BJ (cell line): ENCODE measurements at regions of chr21 and their contacts with region 1.

Region 1: DNA sequence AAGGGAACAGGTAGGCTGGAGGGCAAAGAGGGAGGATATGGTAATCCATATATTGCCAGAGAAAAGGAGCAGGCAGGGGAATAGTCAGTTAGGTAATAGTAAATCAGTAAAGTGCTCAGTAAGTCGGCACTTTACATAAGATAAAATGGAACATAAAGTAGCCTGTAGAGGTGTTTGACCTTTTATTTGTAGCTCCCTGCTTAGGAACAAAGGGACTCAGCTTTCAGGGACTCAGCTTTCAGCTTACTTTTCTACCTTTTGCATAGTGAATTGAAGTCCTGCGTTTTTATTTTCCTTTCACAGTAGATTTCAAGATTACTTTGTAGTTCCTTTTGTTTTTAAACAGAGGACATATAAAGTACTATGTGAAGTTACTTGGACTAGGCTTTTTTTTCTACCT is 87.3 kb downstream of the ITSN1 start:
- DNase-seq: no peak
- H3K4me3 ChIP-seq: no peak overlapping the region
- H3K27me3 ChIP-seq: no peaks in the 10 kb centered on the region
- CTCF ChIP-seq: no peak

Region 2: GRCh38 chr21:33470701-33471100 is 258.9 kb before region 1 on chr21:
- CTCF ChIA-PET with region 1: no interaction called
- POLR2A ChIA-PET with region 1: no interaction called
- DNase-seq: no peak
- H3K4me3 ChIP-seq: no peak overlapping the region
- H3K27me3 ChIP-seq: no peaks in the 10 kb centered on the region
- CTCF ChIP-seq: no peak

Region 3: GRCh38 chr21:33712022-33712803 is 17.4 kb before region 1 on chr21:
- CTCF ChIA-PET with region 1: interaction called, 6 read pairs
- POLR2A ChIA-PET with region 1: interaction called, 16 read pairs
- DNase-seq: no peak
- H3K4me3 ChIP-seq: no peak overlapping the region
- H3K27me3 ChIP-seq: no peaks in the 10 kb centered on the region
- CTCF ChIP-seq: no peak

Region 4: DNA sequence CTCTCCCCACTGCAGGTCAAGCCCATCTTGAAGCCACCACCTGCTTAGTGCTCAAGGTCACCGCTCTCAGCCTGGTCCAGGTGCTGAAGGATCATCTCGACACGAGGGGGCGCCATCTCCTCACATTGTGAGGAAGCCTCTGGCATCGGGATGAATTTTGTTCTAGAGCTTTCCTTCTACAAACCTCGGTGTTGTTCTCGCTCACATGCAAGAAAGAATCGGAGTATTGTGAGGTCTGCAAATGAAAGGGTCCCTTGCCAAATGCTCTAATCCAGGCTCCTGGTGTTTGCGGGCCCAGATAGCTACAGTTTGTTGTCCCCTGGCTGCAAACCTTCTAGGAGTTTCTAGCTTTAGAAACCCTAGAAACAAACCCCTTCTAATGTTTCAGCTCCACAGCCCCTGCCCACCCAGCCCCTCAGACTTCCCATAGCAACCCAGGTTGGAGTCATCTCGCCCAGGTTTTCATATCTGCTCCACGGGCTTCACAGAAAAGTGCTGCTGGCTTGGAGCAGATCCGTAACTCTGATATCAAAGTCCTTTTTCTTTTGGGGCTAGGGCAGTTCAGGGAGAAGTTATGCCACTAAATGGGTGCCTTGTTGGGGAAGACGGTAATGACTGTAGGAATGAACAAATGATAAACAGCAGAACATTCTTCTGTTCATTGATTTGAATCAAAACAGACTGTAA is 194.6 kb after region 1 on chr21:
- CTCF ChIA-PET with region 1: no interaction called
- POLR2A ChIA-PET with region 1: no interaction called
- DNase-seq: no peak
- H3K4me3 ChIP-seq: no peak overlapping the region
- H3K27me3 ChIP-seq: no peaks in the 10 kb centered on the region
- CTCF ChIP-seq: peak; percentile 86